ENCODE measurements at regions of chr12 and their contacts with region 1.

Region 1: DNA sequence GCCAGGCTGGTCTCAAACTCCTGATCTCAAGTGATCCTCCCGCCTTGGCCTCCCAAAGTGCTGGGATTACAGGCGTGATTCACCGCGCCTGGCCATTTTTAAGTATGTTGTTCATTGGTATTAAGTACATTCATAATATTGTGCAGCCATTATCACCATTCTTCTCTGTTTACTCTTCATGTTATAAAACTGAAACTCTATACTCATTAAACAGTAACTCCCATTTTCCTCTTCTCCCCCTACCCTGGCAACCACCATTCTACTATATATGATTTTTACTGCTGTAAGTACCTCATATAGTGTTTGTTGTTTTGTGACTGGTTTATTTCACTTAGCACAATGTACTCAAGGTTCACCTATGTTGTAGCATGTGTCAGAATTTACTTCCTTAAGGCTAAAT is 23.1 kb downstream of the METAP2 start:
- DNase-seq: no peak
- H3K4me3 ChIP-seq: no peak overlapping the region
- CTCF ChIP-seq: no peak

Region 2: GRCh38 chr12:95418142-95418541 is 78.9 kb before region 1 on chr12:
- in situ Hi-C with region 1: no loop called
- DNase-seq: no peak
- H3K4me3 ChIP-seq: no peak overlapping the region
- CTCF ChIP-seq: no peak

Region 3: GRCh38 chr12:95532851-95533250 is 35.8 kb after region 1 on chr12:
- in situ Hi-C with region 1: loop called (anchors 5 kb)
- DNase-seq: peak; percentile 18
- H3K4me3 ChIP-seq: no peak overlapping the region
- CTCF ChIP-seq: no peak